ENCODE measurements at regions of chr13 and their contacts with region 1.

Region 1: DNA sequence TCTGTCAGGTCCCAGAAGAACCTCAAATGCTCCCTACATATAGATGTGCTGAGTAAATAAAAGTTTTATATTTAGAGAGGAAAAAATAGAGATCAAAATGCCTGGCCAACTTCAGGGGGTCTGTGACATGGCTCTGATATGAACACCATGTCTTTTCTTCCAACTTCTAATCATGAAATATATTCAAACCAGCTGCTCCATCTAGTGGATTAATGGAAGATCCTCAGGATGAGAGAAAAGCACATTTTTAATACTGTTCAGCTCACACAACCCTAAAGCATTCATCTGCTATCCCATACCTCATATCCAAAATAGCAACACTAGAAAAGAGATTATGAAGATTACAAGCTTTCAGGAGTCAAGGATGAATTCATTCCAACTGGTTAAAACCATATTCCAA is 56.0 kb upstream of the DOCK9 start:
- DNase-seq: no peak
- H3K4me3 ChIP-seq: no peak overlapping the region
- H3K27ac ChIP-seq: peak overlapping the region in 3 of 59 donors; percentile 11 to 55 (median 11)
- H3K27me3 ChIP-seq: no peaks in the 10 kb centered on the region
- CTCF ChIP-seq: peak; percentile 34 to 91 (median 74)

Region 2: GRCh38 chr13:98890186-98890585 is 143.6 kb before region 1 on chr13:
- intact Hi-C with region 1: loop called (anchors 2 to 5 kb)
- DNase-seq: peak in 9 of 10 donors; percentile 39 to 76 (median 64)
- H3K4me3 ChIP-seq: peak overlapping the region in 1 of 59 donors; percentile 14
- H3K27ac ChIP-seq: peak overlapping the region in 41 of 59 donors; percentile 2 to 74 (median 48)
- H3K27me3 ChIP-seq: no peaks in the 10 kb centered on the region
- CTCF ChIP-seq: peak in 15 of 56 donors; percentile 5 to 49 (median 18)

Region 3: GRCh38 chr13:99067160-99067985 is 33.6 kb after region 1 on chr13:
- intact Hi-C with region 1: no loop called
- DNase-seq: no peak
- H3K4me3 ChIP-seq: no peak overlapping the region
- H3K27ac ChIP-seq: no peak overlapping the region
- H3K27me3 ChIP-seq: no peaks in the 10 kb centered on the region
- CTCF ChIP-seq: no peak

Region 4: DNA sequence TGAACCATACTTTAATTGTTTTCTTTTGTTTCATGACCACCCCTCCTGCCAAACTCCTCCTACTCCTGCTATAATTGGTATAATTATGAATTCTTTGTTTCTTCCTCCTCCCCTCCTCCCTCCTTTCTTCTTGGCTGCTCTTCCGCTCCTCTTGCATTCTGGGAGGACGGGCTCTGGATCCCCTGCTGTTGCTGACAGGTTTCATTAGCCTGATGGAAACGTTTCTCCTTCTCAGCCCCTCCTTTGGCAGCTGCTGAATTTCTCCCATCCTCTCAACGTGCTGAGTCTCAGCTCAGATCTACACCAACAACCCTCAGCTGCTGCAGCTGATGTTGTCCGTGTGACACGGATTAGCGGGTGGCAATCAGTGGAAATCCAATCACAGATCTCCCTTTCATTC is 69.7 kb after region 1 on chr13:
- intact Hi-C with region 1: no loop called
- DNase-seq: peak in 1 of 10 donors; percentile 74
- H3K4me3 ChIP-seq: peak overlapping the region in 34 of 59 donors; percentile 2 to 54 (median 27)
- H3K27ac ChIP-seq: peak overlapping the region in 6 of 59 donors; percentile 2 to 49 (median 28)
- H3K27me3 ChIP-seq: peaks cover 0 to 4% (median 0%) of the 10 kb centered on the region in 45 donors
- CTCF ChIP-seq: no peak